K562 (cell line): ENCODE measurements at regions of chr16 and their contacts with region 1.

Region 1: DNA sequence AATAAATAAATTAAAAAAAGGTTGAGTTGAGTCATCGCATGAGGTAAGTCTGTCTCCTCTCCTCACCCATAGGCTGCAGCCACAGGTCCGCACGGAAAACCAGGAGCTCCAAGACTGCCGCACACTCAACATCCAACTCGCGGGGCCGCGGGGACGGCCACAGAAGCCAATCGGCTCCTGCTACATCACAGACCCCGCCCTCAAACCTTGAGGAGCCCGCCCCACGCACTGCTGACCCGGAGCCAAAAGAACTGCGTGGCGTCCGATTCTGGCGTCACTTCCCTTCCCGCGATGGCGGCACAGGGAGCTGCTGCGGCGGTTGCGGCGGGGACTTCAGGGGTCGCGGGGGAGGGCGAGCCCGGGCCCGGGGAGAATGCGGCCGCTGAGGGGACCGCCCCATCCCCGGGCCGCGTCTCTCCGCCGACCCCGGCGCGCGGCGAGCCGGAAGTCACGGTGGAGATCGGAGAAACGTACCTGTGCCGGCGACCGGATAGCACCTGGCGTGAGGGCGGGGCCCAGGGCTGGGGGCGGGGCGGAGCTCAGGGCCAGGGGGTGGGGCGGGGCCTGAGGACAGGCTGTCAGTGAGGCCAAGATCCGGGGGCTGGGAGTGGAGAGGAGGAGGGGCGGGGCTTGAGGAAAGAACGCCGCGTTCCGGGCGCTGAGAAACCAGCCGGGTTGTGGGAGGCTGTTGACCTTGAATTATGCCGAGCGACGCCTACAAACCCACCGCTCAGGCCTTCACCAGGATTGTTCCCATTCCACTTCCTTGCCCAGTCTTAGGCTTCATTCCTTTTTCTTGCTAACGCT is at the start of gene KAT8:
- DNase-seq: peak; percentile 98 to 99 (median 98)
- ATAC-seq: peak; percentile 95
- H3K4me3 ChIP-seq: peak within 1 kb of the TSS; percentile 68
- H3K27ac ChIP-seq: peak within 1 kb of the TSS; percentile 91
- H3K4me1 ChIP-seq: peaks cover 2 to 19% of the 10 kb centered on the region in 2 experiments; a peak in 4 of 5 replicates
- H3K27me3 ChIP-seq: no peaks in the 10 kb centered on the region
- CTCF ChIP-seq: no peak
- EP300 ChIP-seq: peak; percentile 50
- POLR2A ChIP-seq: peak; percentile 95
- RAD21 ChIP-seq: no peak; a peak in 1 of 4 replicates
- polyA plus RNA-seq, gene KAT8: 10.0 to 12.3 TPM

Region 2: GRCh38 chr16:31029272-31029671 is 88.3 kb before region 1 on chr16:
- CTCF ChIA-PET with region 1: no interaction called
- POLR2A ChIA-PET with region 1: no interaction called
- in situ Hi-C with region 1: no loop called
- intact Hi-C with region 1: no loop called
- DNase-seq: no peak
- ATAC-seq: no peak
- H3K4me3 ChIP-seq: no peak overlapping the region
- H3K27ac ChIP-seq: no peak overlapping the region
- H3K4me1 ChIP-seq: peaks cover 16 to 18% of the 10 kb centered on the region in 2 experiments
- H3K27me3 ChIP-seq: no peaks in the 10 kb centered on the region
- CTCF ChIP-seq: no peak
- EP300 ChIP-seq: no peak
- POLR2A ChIP-seq: no peak
- RAD21 ChIP-seq: no peak

Region 3: DNA sequence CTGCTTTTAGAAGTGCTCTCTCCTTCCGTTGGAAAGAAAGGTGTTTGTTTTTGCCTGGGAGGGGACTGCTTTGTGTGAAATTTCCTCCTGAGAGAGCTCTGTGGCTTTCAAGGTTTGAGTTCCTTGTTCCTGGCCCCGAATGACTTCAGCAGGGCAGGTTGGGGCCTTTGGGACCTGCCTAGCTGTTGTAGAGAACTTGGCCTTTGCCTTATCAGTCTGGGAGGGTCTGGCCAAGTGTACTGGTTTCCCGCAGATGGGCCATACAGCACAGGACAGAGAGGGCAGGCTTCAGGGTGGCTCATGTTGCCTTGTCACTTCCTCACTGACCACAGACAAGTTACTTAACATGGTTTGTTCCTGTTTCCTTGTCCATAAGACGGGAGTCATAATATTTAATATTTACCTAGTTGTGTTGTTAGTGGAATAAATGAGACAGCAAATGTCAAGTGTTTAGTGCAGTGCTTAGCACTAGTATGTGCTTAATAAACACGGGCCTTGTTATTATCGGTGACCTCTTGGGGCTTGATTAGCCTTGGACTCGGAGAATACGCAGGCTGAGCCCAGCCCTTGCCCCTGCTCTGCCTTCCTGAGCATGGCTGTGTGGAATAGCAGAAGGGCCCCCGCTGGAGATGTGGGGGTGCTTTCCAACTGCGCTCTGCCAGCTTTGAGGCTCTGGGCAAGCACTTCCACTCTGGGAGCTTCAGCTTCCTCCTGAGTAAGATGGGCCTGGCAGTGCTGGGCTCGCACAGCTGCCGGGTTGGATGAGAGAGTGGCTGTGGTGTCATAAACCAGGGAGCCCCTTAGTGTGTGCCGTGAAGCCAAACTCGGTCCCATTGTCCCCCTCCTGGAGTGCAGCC is 11.3 kb after region 1 on chr16:
- CTCF ChIA-PET with region 1: no interaction called
- POLR2A ChIA-PET with region 1: interaction called, 44 read pairs
- in situ Hi-C with region 1: no loop called
- intact Hi-C with region 1: no loop called
- DNase-seq: peak; percentile 51 to 87 (median 68)
- ATAC-seq: peak; percentile 88
- H3K4me3 ChIP-seq: no peak overlapping the region
- H3K27ac ChIP-seq: peak overlapping the region; percentile 90
- H3K4me1 ChIP-seq: peaks cover 27 to 69% of the 10 kb centered on the region in 2 experiments
- H3K27me3 ChIP-seq: no peaks in the 10 kb centered on the region
- CTCF ChIP-seq: no peak; a peak in 1 of 6 replicates
- EP300 ChIP-seq: peak; percentile 55; the same call in 1 of the 2 replicates
- POLR2A ChIP-seq: no peak
- RAD21 ChIP-seq: peak in 1 of 2 experiments; percentile 30; a peak in 1 of 4 replicates

Region 4: DNA sequence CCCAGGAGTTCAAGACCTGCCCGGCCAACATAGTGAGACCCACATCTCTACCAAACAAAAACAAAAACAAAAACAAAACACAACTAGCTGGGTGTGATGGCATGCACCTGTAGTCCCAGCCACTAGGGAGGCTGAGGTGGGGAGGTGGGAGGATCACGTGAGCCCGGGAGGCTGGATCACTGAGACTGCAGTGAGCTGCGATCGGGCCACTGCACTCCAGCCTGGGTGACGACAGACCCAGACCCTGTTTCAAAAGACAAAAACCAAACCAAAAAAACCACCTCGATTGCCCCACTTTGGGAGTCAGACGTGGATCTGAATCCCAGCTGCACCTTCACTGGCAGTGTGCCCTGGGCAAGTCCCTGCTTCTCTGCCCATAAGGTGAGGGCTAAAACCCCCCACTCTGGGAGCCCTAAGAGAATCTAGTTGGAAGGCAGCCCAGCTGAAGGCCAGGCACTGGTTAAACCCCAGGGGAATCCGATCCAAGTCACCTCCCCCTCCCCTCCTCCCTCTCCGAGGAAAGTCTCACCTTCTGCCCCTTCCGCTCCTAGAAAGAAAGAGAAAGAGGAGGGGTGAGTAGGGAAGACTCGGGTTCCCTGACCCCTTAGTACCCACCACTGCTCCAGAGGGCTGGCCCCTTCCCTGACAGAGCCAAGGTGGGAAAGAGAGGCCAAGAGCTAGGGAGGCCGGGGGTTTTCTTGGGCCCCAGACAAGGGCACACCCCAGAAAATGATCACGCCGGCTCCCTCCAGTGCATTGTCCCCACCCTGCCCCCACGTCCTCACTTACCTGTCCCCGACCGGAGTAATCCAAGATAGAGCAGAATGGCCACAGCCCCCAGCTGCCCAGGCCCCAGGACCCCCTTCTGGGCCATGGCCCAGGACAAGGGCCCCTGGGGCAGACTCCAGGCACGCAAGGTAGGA is 17.3 kb after region 1 on chr16:
- CTCF ChIA-PET with region 1: no interaction called
- POLR2A ChIA-PET with region 1: interaction called, 44 read pairs
- in situ Hi-C with region 1: no loop called
- intact Hi-C with region 1: no loop called
- DNase-seq: peak in 2 of 4 experiments; percentile 19 to 48
- ATAC-seq: peak; percentile 81
- H3K4me3 ChIP-seq: peak overlapping the region; percentile 26; the same call in 1 of the 2 replicates
- H3K27ac ChIP-seq: peak overlapping the region; percentile 41; the same call in 1 of the 3 replicates
- H3K4me1 ChIP-seq: peaks cover 31 to 79% of the 10 kb centered on the region in 2 experiments
- H3K27me3 ChIP-seq: no peaks in the 10 kb centered on the region
- CTCF ChIP-seq: no peak
- EP300 ChIP-seq: no peak
- POLR2A ChIP-seq: no peak
- RAD21 ChIP-seq: no peak

Region 5: GRCh38 chr16:31142109-31143010 is 24.8 kb after region 1 on chr16:
- CTCF ChIA-PET with region 1: no interaction called
- POLR2A ChIA-PET with region 1: interaction called, 35 read pairs
- in situ Hi-C with region 1: no loop called
- intact Hi-C with region 1: loop called (anchors 2 kb)
- DNase-seq: peak; percentile 99 to 100 (median 100)
- ATAC-seq: peak; percentile 97
- H3K4me3 ChIP-seq: peak overlapping the region; percentile 28
- H3K27ac ChIP-seq: peak overlapping the region; percentile 67
- H3K4me1 ChIP-seq: peaks cover 14 to 43% of the 10 kb centered on the region in 2 experiments
- H3K27me3 ChIP-seq: peaks cover 13 to 19% of the 10 kb centered on the region in 2 experiments; a peak in 4 of 5 replicates
- CTCF ChIP-seq: peak; percentile 89 to 95 (median 93)
- EP300 ChIP-seq: no peak
- POLR2A ChIP-seq: peak; percentile 65
- RAD21 ChIP-seq: peak; percentile 91 to 94

Region 6: DNA sequence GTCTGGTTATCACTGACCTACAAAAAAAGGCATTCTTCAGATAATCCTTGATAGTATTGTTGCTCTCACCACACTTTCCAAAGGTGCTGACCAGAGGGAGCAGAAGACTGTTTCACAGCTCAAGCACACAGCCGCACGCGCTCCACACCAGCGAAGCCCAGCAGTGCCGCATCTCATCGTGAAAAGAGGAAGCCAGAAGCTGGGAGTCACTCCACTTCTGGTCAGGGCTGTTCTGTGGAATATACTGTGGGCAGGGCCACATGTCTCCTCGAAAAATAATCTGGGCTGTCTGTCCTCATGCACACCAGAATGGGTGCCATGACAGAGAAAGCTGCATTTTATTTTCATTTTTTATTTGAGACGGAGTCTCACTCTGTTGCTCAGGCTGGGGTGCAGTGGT is 39.5 kb after region 1 on chr16:
- CTCF ChIA-PET with region 1: no interaction called
- POLR2A ChIA-PET with region 1: no interaction called
- in situ Hi-C with region 1: no loop called
- intact Hi-C with region 1: no loop called
- DNase-seq: peak in 2 of 4 experiments; percentile 42 to 64
- ATAC-seq: peak; percentile 93
- H3K4me3 ChIP-seq: no peak overlapping the region
- H3K27ac ChIP-seq: no peak overlapping the region
- H3K4me1 ChIP-seq: peaks cover 0 to 7% of the 10 kb centered on the region in 2 experiments; a peak in 3 of 5 replicates
- H3K27me3 ChIP-seq: no peaks in the 10 kb centered on the region
- CTCF ChIP-seq: no peak
- EP300 ChIP-seq: no peak
- POLR2A ChIP-seq: no peak
- RAD21 ChIP-seq: no peak

Region 7: GRCh38 chr16:31344712-31345111 is 227.1 kb after region 1 on chr16:
- CTCF ChIA-PET with region 1: no interaction called
- POLR2A ChIA-PET with region 1: no interaction called
- in situ Hi-C with region 1: no loop called
- intact Hi-C with region 1: no loop called
- DNase-seq: no peak
- ATAC-seq: no peak
- H3K4me3 ChIP-seq: no peak overlapping the region
- H3K27ac ChIP-seq: no peak overlapping the region
- H3K4me1 ChIP-seq: no peaks in the 10 kb centered on the region; a peak in 1 of 5 replicates
- H3K27me3 ChIP-seq: peaks cover 0 to 14% of the 10 kb centered on the region in 2 experiments; a peak in 2 of 5 replicates
- CTCF ChIP-seq: no peak
- EP300 ChIP-seq: no peak
- POLR2A ChIP-seq: no peak
- RAD21 ChIP-seq: no peak